HepG2 (cell line): ENCODE measurements at regions of chr1 and their contacts with region 1.

Region 1: DNA sequence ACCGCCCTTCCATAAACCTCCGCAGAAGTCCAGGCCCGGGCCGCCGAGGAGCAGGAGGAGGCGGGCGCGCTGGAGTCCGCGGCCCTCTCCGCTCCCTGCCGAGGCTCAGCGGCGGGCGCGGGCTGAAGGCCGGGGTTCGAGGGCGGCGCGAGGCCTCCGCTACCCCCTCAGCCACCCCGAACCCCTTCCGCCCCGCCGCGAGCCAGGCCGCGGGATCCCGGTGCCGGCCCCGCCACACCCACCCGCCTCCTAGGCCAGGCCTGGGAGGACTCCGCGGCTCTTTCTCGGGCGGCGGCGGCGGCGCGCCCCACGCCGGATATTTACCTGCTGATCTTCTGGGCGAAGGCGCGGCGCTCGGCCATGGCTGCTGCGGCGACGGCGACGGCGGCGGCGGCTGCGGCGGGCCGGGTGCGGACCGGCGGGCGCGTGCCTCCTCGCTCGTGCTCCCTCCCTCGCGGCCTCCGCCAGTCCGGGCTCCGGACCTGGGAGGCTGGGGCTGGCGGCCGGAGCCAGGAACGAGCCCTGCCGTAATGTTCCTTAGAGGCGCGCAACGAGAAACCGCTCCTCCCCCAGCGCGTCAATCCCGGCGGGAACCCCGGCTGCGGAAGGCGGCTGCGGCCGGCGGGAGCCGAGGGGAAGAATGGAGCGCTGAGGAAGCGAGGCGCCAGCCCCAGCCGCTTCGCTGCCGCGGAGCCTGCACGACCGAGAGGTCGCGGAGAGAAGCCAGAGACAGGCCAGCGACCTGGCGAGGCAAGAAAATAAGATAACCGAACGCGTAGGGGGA is at the start of gene DOCK7:
- DNase-seq: peak; percentile 48
- ATAC-seq: peak; percentile 61
- H3K4me3 ChIP-seq: peak within 1 kb of the TSS; percentile 75 to 100 (median 96)
- H3K27ac ChIP-seq: peak within 1 kb of the TSS; percentile 96
- H3K4me1 ChIP-seq: peaks cover 71% of the 10 kb centered on the region
- H3K27me3 ChIP-seq: peaks cover 0 to 5% of the 10 kb centered on the region in 2 experiments; a peak in 2 of 5 replicates
- CTCF ChIP-seq: no peak
- EP300 ChIP-seq: peak in 1 of 2 experiments; percentile 37; a peak in 1 of 4 replicates
- POLR2A ChIP-seq: no peak; a peak in 2 of 4 replicates
- RAD21 ChIP-seq: no peak; the same call in 1 of the 2 replicates
- total RNA-seq, gene DOCK7: 45.7 and 86.5 TPM in 2 replicates

Region 2: GRCh38 chr1:62725255-62725654 is 37.2 kb after region 1 on chr1:
- CTCF ChIA-PET with region 1: no interaction called
- POLR2A ChIA-PET with region 1: interaction called, 28 read pairs
- in situ Hi-C with region 1: loop called (anchors 5 kb)
- intact Hi-C with region 1: no loop called
- DNase-seq: no peak
- ATAC-seq: no peak
- H3K4me3 ChIP-seq: no peak overlapping the region
- H3K27ac ChIP-seq: no peak overlapping the region
- H3K4me1 ChIP-seq: peaks cover 67% of the 10 kb centered on the region
- H3K27me3 ChIP-seq: no peaks in the 10 kb centered on the region
- CTCF ChIP-seq: no peak
- EP300 ChIP-seq: no peak
- POLR2A ChIP-seq: no peak
- RAD21 ChIP-seq: no peak

Region 3: GRCh38 chr1:62735491-62736171 is 47.5 kb after region 1 on chr1:
- CTCF ChIA-PET with region 1: no interaction called
- POLR2A ChIA-PET with region 1: interaction called, 55 read pairs
- in situ Hi-C with region 1: loop called (anchors 5 kb)
- intact Hi-C with region 1: loop called (anchors 1 kb)
- DNase-seq: no peak
- ATAC-seq: no peak
- H3K4me3 ChIP-seq: no peak overlapping the region
- H3K27ac ChIP-seq: peak overlapping the region; percentile 77
- H3K4me1 ChIP-seq: peaks cover 57% of the 10 kb centered on the region
- H3K27me3 ChIP-seq: no peaks in the 10 kb centered on the region
- CTCF ChIP-seq: no peak
- EP300 ChIP-seq: no peak
- POLR2A ChIP-seq: no peak
- RAD21 ChIP-seq: no peak

Region 4: GRCh38 chr1:63773815-63774616 is 1085.9 kb after region 1 on chr1 and contains the start of gene ROR1:
- CTCF ChIA-PET with region 1: no interaction called
- POLR2A ChIA-PET with region 1: no interaction called
- in situ Hi-C with region 1: no loop called
- intact Hi-C with region 1: no loop called
- DNase-seq: peak; percentile 60
- ATAC-seq: peak; percentile 97
- H3K4me3 ChIP-seq: peak within 1 kb of the TSS; percentile 61 to 80 (median 70)
- H3K27ac ChIP-seq: no peak within 1 kb of the TSS
- H3K4me1 ChIP-seq: peaks cover 40% of the 10 kb centered on the region
- H3K27me3 ChIP-seq: peaks cover 0 to 22% of the 10 kb centered on the region in 2 experiments; a peak in 1 of 5 replicates
- CTCF ChIP-seq: peak; percentile 92
- EP300 ChIP-seq: no peak
- POLR2A ChIP-seq: no peak
- RAD21 ChIP-seq: peak; percentile 45
- total RNA-seq, gene ROR1: 1.6 and 2.3 TPM in 2 replicates